Posterior cingulate gyrus (tissue), 11 donors: ENCODE measurements at regions of chr3 and their contacts with region 1.

Region 1: DNA sequence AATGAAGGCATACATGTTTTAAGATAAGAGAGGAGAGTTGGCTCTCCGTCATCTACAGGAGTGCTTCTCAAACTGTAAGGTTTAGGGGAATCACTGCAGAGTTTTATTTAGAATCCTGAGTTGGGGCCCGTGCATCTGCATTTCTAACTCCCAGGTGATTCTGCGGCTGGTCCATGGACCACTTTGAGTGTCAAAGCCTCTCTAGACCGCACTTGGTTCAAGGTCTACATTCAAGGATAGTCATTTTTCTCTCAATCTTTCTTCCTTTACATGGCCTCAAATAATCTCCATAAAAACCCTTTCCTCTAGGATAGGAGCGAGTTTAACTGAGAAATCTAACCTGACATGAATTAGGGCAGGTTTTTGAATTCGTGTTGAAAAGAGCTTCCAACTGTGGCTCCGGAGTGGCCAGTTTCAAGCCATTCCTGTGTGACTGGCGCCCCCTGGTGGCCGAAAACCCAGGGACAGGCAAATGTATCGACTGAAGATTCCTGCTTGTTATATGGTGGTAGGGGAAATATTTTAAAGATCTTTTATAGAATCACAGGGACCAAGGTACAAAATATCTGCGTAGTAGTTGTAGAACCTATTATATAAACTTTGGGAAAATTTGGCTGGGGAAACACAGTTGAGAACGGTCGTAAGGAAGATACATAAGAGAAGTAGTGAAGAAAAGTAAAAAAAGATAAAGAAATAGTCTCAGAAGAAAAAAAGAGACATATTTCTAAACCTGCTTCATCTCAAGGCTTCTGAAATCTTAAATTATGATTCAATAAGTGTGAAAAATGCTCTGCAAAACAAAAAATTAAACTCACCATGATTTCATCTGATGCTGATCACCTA is 11.9 kb downstream of the GABRR3 start:
- DNase-seq: peak; percentile 81 to 99 (median 97)

Region 2: DNA sequence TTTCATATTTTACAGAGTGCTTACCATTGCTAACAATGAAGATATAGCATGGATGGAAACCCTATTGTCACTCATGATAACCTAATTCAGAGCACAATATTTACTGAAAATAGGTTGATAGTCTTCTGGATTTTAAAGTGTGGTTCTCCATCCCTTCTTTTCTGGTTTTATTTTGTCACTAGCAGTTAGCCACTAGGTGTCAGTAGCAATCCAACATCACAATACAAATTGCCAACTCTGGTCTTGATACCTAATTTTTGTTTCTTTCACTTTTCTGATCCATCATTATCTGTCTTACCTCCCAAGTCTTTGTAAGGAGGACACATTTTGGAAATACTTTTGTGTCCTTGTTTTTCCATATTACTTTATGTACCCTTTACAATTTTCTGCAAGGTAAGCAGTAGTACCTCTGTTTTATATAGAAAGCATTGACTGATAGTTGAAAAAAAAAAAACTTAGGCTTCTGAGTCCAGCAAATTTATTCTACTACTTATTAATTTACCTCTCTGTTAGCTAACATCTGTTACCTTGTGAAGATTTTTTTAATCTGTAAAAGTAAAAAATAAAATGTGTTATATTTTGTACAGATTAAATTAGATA is 229.7 kb before region 1 on chr3:
- intact Hi-C with region 1: loop called (anchors 1 kb)
- DNase-seq: no peak

Region 3: DNA sequence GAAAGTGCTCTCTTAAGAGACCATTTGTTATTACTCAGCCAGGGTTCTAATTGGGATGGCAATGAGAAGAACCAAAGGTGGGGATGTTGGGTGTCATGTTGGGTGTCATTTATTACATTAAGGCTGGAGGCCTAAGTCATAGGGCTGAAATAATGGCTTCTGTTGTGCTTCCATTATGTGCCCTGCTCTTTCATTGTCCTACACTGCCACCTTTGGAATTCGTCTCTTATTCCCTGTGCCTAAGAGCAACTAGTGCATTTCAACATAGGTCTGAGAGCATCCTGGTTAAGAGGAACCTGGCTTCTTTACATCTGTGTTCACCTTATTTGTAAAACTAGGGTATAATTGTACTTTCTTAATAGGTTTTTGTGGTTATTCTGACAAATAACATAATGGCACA is 83.2 kb before region 1 on chr3:
- intact Hi-C with region 1: loop called (anchors 1 kb)
- DNase-seq: no peak

Region 4: DNA sequence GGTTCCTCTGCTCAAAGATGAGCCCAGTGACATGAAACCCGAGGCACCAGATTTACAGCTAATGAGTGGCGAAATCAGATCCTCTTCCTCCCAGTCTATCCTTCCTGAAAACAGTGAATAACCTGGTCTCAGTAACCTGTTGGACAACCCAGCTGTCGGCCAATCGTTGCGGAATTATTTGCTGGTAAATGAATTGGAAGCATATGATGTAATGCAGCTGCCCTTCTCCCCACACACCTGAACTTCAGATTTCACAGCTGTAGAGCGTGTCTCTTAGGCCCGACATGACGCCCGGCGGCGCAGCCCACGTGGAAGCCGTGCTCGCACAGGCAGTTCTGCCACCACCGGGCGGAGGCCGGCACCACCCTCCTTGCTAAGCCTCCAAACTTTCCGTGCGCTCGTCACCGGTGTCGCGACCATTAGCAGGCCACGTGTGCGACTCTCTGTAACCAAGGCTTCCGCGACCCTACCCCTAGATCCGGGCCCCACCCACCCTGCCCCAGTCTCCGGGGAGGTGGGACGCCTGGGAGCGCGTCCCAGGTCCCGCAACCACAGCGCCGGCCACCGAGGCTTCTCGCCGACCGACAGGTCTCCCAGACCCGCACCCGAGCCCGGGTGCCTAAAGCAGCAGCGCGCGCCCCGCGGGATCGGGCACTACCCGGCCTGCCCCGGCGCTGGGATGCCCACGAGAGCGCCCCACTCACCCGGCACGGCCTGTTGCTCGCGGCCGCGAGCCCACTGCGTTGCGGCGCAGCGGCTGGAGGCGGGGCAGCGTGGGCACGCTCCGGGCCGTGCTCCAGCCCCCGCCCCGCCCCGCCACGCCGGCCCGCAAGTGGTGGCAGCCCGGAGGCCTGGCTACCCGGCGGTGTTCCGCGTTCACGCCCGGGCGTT is 51.3 kb before region 1 on chr3 and contains the start of gene RIOX2:
- intact Hi-C with region 1: loop called (anchors 5 kb)
- DNase-seq: peak; percentile 53 to 95 (median 70)